GM13976 (cell line): ENCODE measurements at regions of chr18 and their contacts with region 1.

Region 1: GRCh38 chr18:61475931-61476330 is 142.7 kb downstream of the CDH20 start:
- DNase-seq: no peak
- CTCF ChIP-seq: no peak

Region 2: GRCh38 chr18:61085761-61086160 is 390.2 kb before region 1 on chr18:
- in situ Hi-C with region 1: loop called (anchors 25 kb)
- DNase-seq: no peak
- CTCF ChIP-seq: no peak

Region 3: DNA sequence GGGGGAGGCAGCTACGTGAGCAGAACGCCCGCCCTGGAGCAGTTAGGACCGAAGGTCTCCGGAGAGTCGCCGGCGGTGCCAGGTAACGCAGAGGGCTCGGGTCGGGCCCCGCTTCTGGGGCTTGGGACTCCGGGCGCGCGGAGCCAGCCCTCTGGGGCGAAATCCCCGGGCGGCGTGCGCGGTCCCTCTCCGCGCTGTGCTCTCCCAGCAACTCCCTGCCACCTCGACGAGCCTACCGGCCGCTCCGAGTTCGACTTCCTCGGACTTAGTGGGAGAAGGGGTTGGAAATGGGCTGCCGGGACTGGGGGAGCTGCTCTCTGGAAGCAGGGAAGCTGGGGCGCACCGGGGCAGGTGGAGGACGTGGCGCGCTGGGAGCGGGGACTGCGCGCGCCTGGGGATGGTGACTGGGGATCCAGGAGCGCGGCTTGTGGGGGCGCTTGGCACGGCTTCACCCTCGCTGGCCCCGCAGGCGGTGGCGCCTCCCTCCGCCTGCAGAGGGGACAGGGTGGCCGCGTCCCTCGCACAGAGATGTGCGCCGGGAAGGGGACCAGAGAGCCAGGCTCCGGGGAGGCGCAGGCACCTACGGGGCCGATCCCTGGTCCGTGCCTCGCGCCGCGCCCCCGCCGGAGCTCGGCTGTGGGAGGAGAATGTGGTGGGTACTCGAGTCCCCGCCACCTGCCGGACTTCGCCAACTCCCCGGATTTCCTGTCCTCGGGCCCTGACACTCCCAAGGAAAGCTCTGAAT is 142.0 kb before region 1 on chr18:
- in situ Hi-C with region 1: loop called (anchors 25 kb)
- DNase-seq: no peak
- CTCF ChIP-seq: no peak